OCI-LY7 (cell line): ENCODE measurements at regions of chr17 and their contacts with region 1.

Region 1: DNA sequence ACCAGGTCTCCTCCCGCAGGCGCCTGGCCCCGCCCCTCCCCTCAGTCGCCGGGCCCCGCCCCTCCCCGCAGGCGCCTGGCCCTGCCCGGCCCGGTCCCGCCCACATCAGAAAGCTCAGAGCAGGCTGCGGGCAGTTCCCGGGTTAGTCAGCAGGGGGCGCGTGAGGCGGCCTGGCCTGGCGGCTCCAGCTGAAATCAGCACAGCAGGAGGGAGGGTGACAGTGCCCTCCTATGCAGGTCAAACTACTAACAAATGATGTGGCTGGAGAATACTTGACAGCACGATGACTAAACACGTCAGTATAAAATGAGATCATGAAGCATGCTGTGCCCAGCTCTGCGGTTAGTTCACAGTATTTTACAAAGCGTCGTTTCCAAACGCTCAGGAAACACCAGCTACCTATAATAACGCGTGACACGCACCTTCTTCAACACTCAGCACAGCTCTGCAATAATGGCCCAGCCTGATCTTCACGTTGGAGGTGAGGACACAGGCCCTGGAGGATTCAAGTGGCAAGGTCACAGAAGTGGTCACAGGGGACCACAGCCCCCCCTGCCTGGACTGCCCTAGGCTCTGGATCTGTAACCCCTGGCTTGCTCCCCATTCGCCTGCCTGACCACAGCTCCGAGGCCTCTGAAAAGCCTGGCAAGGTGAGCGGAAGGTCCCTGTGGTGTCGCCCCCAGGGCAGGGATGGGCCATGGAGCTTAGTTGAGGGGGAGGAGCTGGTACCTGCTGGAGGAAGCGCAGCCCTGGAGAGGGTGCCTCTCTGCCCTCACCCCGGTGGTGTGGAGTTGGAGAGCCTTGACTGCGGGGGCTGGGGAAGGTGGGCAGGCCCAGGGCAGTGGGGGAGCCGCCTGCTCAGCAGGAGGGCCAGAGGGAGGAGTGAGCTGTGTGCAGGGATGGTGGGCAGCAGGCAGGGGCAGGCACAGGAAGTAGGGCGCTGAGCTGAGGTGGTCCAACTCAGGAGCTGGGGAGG is 81.2 kb downstream of the KCNJ12 start:
- DNase-seq: peak; percentile 81
- H3K4me3 ChIP-seq: no peak overlapping the region
- H3K27ac ChIP-seq: no peak overlapping the region
- H3K4me1 ChIP-seq: no peaks in the 10 kb centered on the region
- CTCF ChIP-seq: peak; percentile 85

Region 2: GRCh38 chr17:19614900-19615299 is 1842.4 kb before region 1 on chr17:
- CTCF ChIA-PET with region 1: interaction called, 12 read pairs
- POLR2A ChIA-PET with region 1: no interaction called
- intact Hi-C with region 1: no loop called
- DNase-seq: peak; percentile 10
- H3K4me3 ChIP-seq: no peak overlapping the region
- H3K27ac ChIP-seq: no peak overlapping the region
- H3K4me1 ChIP-seq: no peaks in the 10 kb centered on the region
- CTCF ChIP-seq: peak; percentile 62

Region 3: GRCh38 chr17:21511363-21512198 is 54.2 kb after region 1 on chr17:
- CTCF ChIA-PET with region 1: interaction called, 7 read pairs
- POLR2A ChIA-PET with region 1: no interaction called
- intact Hi-C with region 1: loop called (anchors 5 kb)
- DNase-seq: peak; percentile 50
- H3K4me3 ChIP-seq: no peak overlapping the region
- H3K27ac ChIP-seq: no peak overlapping the region
- H3K4me1 ChIP-seq: peaks cover 3% of the 10 kb centered on the region
- CTCF ChIP-seq: peak; percentile 73

Region 4: GRCh38 chr17:21689604-21690003 is 232.3 kb after region 1 on chr17:
- CTCF ChIA-PET with region 1: interaction called, 14 read pairs
- POLR2A ChIA-PET with region 1: no interaction called
- intact Hi-C with region 1: no loop called
- DNase-seq: no peak
- H3K4me3 ChIP-seq: no peak overlapping the region
- H3K27ac ChIP-seq: no peak overlapping the region
- H3K4me1 ChIP-seq: no peaks in the 10 kb centered on the region
- CTCF ChIP-seq: no peak